ENCODE measurements at regions of chr9 and their contacts with region 1.

Region 1: DNA sequence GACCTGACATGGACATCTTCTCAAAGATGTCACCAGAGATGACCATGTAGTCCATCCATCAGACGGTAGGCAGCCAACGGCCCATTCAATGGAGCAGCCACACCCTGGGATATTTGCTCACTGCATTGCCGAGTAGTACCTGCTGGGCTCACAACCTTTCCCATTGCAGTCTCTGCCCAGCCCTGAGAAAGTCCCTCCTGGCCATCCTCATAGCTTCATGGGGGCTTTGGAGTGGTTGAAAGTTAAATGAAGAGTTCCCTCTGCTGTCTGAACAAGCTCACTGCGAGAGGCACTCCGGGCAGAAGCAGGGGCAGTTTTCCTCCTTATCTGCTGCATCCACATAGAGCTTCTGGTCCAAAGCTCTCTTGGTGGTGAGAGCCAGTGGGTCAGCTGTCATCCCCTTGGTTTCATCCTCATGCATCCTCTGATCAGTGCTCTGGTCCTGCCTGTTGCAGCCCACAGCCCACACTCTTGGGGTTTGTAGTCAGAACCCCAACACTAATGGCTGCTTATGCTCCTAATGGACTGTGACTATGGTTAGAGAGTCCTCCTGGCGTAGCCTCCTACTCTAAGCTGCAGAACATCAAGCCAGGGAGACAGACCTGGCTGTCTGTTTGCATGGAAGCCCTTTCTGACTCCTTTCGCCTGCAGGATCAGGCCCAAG is 23.4 kb downstream of the TNFSF8 start:
- DNase-seq: peak; percentile 56
- H3K27ac ChIP-seq: peak overlapping the region; percentile 61; the same call in 1 of the 2 replicates
- CTCF ChIP-seq: no peak; the same call in 1 of the 2 replicates

Region 2: GRCh38 chr9:114681594-114682332 is 225.3 kb before region 1 on chr9 and contains the start of gene TEX48:
- CTCF ChIA-PET with region 1: interaction called, 29 read pairs
- POLR2A ChIA-PET with region 1: no interaction called
- DNase-seq: peak; percentile 78
- H3K27ac ChIP-seq: peak within 1 kb of the TSS; percentile 6; the same call in 1 of the 2 replicates
- CTCF ChIP-seq: peak; percentile 95

Region 3: DNA sequence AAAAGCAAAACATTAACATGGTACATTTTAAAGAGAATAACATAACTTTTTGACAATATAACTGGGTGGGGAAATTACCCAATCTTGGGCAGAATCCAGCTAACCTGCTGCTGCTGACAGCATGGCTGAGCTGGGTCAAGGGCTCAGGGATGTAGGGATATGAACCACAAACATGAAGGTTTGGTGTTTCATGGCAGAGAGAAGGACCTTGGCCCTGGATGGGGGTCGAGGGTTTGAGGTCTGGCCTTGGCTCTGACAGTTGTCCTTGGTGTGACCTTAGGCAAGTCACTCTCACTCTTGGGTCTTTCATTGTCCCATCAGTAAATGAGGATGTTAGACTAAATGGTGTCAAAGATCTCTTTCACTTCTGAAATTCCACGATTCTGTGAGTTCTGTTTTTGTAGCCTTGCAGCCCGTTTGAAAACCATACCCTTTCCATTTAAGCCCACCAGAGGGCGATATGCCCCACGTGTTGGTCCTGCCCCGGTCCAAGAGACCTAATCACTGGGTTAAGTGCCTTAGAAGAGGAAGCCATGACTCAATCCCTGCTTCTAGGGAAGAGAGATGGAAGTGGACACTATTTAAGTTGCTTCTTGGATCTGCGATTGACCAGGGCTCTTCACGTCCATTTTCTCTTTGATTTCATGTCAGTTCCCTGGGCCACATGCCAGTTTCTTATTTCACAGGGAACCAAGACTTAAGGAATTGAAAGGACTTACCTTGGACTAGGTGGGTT is 168.3 kb before region 1 on chr9:
- CTCF ChIA-PET with region 1: interaction called, 12 read pairs
- POLR2A ChIA-PET with region 1: interaction called, 3 read pairs
- DNase-seq: peak; percentile 95
- H3K27ac ChIP-seq: no peak overlapping the region
- CTCF ChIP-seq: no peak; the same call in none of the 2 replicates

Region 4: DNA sequence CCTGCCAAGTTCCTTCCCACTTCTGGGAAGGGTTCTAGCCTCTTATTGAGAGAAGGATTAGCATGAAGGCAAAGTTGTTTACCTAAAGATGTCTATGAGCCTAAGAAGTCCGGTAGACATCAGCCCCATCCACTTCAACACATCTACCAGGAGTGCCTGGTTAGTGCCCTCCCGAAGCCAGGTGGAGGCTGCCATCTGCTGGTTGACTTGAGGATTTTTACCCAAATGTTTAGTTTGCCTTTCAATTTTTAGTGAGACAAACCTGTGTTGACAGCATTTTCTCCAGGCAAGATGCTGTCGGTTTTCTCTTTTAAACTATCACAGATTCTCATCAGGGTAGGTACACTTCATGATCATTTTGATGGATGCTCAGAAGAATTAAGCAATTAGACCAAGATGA is 107.0 kb after region 1 on chr9:
- CTCF ChIA-PET with region 1: interaction called, 12 read pairs
- POLR2A ChIA-PET with region 1: no interaction called
- DNase-seq: peak; percentile 91
- H3K27ac ChIP-seq: no peak overlapping the region
- CTCF ChIP-seq: peak; percentile 91

Measured in RWPE1 (cell line).